ENCODE measurements at regions of chr14 and their contacts with region 1.

Region 1: GRCh38 chr14:102139248-102140026 is at the start of gene WDR20:
- DNase-seq: peak; percentile 92 to 94 (median 93)
- H3K4me3 ChIP-seq: peak within 1 kb of the TSS; percentile 85 to 98 (median 98)
- H3K4me3 Mint-ChIP-seq: peak within 1 kb of the TSS; percentile 96 to 99
- H3K27ac ChIP-seq: peak within 1 kb of the TSS; percentile 66 to 92
- H3K27ac Mint-ChIP-seq: peak within 1 kb of the TSS; percentile 88 to 98 (median 96)
- H3K4me1 ChIP-seq: peaks cover 16 to 26% of the 10 kb centered on the region in 2 donors
- H3K4me1 Mint-ChIP-seq: peaks cover 19% of the 10 kb centered on the region
- H3K27me3 ChIP-seq: peaks cover 0 to 5% of the 10 kb centered on the region in 2 donors
- H3K27me3 Mint-ChIP-seq: peaks cover 4 to 17% (median 11%) of the 10 kb centered on the region in 3 donors
- CTCF ChIP-seq: no peak
- polyA plus RNA-seq, gene WDR20: 7.4 to 13.3 (median 9.0) TPM

Region 2: DNA sequence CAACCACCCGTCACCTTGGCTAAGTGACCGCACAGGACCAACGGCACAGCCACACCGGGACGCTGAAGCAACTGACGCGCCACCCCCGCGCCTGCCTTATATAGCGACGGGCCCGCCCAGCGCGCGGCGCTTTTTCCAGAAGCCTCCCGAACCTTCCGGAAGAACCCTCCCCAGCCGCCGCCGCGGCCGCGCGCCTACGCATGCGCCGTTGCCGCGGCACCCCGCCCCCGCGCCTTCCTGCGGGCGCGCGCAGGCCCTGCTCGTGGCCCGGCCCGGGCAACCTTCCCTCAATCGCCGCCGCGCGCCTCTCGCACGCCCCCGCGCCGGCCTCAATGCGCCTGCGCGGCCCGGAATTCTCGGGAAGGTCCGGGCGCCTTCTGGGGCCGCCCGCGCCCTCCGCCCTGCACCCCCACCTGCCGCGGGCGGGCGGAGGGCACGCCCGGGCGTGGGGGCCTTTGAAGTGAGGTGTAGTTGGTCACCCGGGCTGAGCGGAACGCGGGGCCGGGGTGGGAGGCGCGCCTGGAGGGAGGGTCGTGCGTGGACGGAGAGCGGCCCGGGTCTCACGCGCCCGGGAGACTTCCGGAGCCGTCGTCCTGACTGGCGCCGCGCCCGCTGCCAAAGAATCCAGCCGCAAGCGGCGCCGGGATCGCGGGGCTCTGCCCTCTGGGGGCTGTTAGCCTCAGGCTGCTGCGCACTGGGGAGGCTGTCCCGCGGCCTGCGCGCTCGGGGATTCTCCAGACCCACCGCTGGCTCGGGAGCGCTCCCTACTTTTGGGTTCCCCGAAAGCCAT is 52.3 kb before region 1 on chr14 and contains the start of gene HSP90AA1:
- intact Hi-C with region 1: loop called in 1 of 2 experiments (anchors 5 kb)
- DNase-seq: peak; percentile 89 to 93 (median 92)
- H3K4me3 ChIP-seq: peak within 1 kb of the TSS; percentile 68 to 88 (median 69)
- H3K4me3 Mint-ChIP-seq: peak within 1 kb of the TSS; percentile 94 to 95
- H3K27ac ChIP-seq: peak within 1 kb of the TSS; percentile 83 to 91
- H3K27ac Mint-ChIP-seq: peak within 1 kb of the TSS; percentile 89 to 97 (median 95)
- H3K4me1 ChIP-seq: peaks cover 25 to 47% of the 10 kb centered on the region in 2 donors
- H3K4me1 Mint-ChIP-seq: peaks cover 54% of the 10 kb centered on the region
- H3K27me3 ChIP-seq: no peaks in the 10 kb centered on the region
- H3K27me3 Mint-ChIP-seq: peaks cover 4 to 6% (median 5%) of the 10 kb centered on the region in 3 donors
- CTCF ChIP-seq: no peak
- polyA plus RNA-seq, gene HSP90AA1: 149 to 211 (median 180) TPM